ENCODE measurements at regions of chr7 and their contacts with region 1.

Region 1: GRCh38 chr7:77570330-77571011 is 33.4 kb downstream of the PTPN12 start:
- DNase-seq: peak; percentile 45
- H3K4me3 ChIP-seq: no peak overlapping the region
- H3K27ac ChIP-seq: peak overlapping the region; percentile 36
- H3K4me1 ChIP-seq: peaks cover 28% of the 10 kb centered on the region
- H3K27me3 ChIP-seq: no peaks in the 10 kb centered on the region
- CTCF ChIP-seq: no peak

Region 2: DNA sequence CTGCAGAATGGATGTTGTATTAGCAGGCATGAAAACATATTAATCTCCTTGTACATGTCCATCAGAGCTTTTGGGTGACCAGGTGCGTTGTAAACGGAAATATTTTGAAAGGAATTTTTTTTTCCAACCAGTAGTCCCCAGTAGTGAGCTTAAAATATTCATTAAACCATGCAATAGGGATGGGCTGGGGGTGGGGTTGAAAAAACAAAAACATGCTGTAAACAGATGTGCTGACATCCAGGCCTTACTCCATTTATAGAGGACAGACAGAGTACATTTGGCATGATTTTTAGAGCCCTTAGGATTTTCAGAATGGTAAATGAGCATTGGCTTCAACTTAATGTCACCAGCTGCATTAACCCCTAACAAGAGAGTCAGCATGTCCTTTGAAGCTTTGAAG is 16.8 kb after region 1 on chr7:
- CTCF ChIA-PET with region 1: interaction called, 13 read pairs
- POLR2A ChIA-PET with region 1: no interaction called
- intact Hi-C with region 1: no loop called
- DNase-seq: no peak
- H3K4me3 ChIP-seq: no peak overlapping the region
- H3K27ac ChIP-seq: no peak overlapping the region
- H3K4me1 ChIP-seq: no peaks in the 10 kb centered on the region
- H3K27me3 ChIP-seq: no peaks in the 10 kb centered on the region
- CTCF ChIP-seq: no peak